CD8-positive, alpha-beta T cell (primary cell): ENCODE measurements at regions of chr6 and their contacts with region 1.

Region 1: GRCh38 chr6:45714741-45715507 is 300.7 kb downstream of the CLIC5 start:
- DNase-seq: peak; percentile 12 to 81 (median 48)
- ATAC-seq: peak; percentile 83
- H3K4me3 ChIP-seq: no peak overlapping the region
- H3K4me3 Mint-ChIP-seq: no peak overlapping the region
- H3K27ac ChIP-seq: no peak overlapping the region
- H3K27ac Mint-ChIP-seq: no peak overlapping the region
- H3K4me1 ChIP-seq: peaks cover 5% of the 10 kb centered on the region
- H3K4me1 Mint-ChIP-seq: peaks cover 12% of the 10 kb centered on the region
- H3K27me3 ChIP-seq: no peaks in the 10 kb centered on the region
- H3K27me3 Mint-ChIP-seq: no peaks in the 10 kb centered on the region
- CTCF ChIP-seq: peak; percentile 72

Region 2: GRCh38 chr6:44475779-44476434 is 1239.0 kb before region 1 on chr6:
- CTCF ChIA-PET with region 1: interaction called, 20 read pairs
- POLR2A ChIA-PET with region 1: interaction called, 4 read pairs
- intact Hi-C with region 1: loop called in 1 of 2 experiments (anchors 1 kb)
- DNase-seq: peak; percentile 26 to 80 (median 60)
- ATAC-seq: peak; percentile 74
- H3K4me3 ChIP-seq: no peak overlapping the region
- H3K4me3 Mint-ChIP-seq: no peak overlapping the region
- H3K27ac ChIP-seq: no peak overlapping the region
- H3K27ac Mint-ChIP-seq: no peak overlapping the region
- H3K4me1 ChIP-seq: peaks cover 9% of the 10 kb centered on the region
- H3K4me1 Mint-ChIP-seq: peaks cover 2% of the 10 kb centered on the region
- H3K27me3 ChIP-seq: no peaks in the 10 kb centered on the region
- H3K27me3 Mint-ChIP-seq: no peaks in the 10 kb centered on the region
- CTCF ChIP-seq: peak; percentile 70

Region 3: GRCh38 chr6:44662461-44663121 is 1052.3 kb before region 1 on chr6:
- CTCF ChIA-PET with region 1: interaction called, 119 read pairs
- POLR2A ChIA-PET with region 1: no interaction called
- intact Hi-C with region 1: no loop called
- DNase-seq: no peak
- ATAC-seq: no peak
- H3K4me3 ChIP-seq: no peak overlapping the region
- H3K4me3 Mint-ChIP-seq: no peak overlapping the region
- H3K27ac ChIP-seq: no peak overlapping the region
- H3K27ac Mint-ChIP-seq: no peak overlapping the region
- H3K4me1 ChIP-seq: no peaks in the 10 kb centered on the region
- H3K4me1 Mint-ChIP-seq: no peaks in the 10 kb centered on the region
- H3K27me3 ChIP-seq: no peaks in the 10 kb centered on the region
- H3K27me3 Mint-ChIP-seq: no peaks in the 10 kb centered on the region
- CTCF ChIP-seq: no peak

Region 4: DNA sequence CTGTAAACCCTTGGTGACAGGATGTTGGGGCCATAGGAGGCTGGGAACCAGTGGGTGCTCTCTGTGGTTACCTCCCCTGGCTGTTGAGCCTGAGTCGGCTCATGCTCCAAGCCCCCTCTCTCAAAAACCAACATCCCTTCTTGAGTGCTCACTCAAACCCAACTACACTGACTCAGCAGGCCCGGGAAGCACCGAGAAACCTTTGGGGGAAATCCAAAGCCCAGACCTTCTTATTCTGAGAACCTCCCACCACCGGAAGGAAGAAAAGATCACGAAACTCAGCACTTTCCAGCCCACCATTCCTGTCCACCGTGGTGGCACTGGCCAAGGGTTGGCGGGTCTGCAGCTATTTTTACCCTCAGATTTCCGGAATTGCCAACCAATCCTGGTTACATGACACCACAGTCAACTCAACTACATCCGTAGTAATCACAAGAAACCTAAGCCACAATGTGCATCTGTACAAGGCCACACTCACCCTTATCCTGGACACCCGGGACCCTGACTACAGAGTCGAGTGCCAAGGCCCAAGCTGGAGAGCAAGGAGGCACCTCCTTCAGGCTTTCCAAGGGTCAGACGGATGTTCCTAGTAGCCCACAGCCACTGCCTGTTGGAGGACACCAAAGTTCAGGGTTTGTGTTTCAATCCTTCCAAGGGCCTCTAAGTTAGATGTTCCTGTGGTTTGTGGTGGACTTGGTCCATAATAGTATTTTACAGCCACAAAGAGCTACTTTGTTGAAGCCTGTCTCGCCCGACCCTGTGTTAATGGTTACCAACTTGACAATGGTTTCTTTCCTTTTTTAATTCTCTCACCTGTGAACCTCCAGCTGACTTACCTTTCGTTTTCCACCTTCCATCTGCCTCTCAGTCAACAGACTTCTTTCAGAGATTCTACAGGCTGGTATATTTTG is 1010.4 kb before region 1 on chr6:
- CTCF ChIA-PET with region 1: no interaction called
- POLR2A ChIA-PET with region 1: no interaction called
- intact Hi-C with region 1: no loop called
- DNase-seq: no peak
- ATAC-seq: no peak
- H3K4me3 ChIP-seq: no peak overlapping the region
- H3K4me3 Mint-ChIP-seq: no peak overlapping the region
- H3K27ac ChIP-seq: no peak overlapping the region
- H3K27ac Mint-ChIP-seq: peak overlapping the region; percentile 3
- H3K4me1 ChIP-seq: no peaks in the 10 kb centered on the region
- H3K4me1 Mint-ChIP-seq: peaks cover 5% of the 10 kb centered on the region
- H3K27me3 ChIP-seq: no peaks in the 10 kb centered on the region
- H3K27me3 Mint-ChIP-seq: no peaks in the 10 kb centered on the region
- CTCF ChIP-seq: no peak

Region 5: GRCh38 chr6:44855562-44856411 is 859.1 kb before region 1 on chr6:
- CTCF ChIA-PET with region 1: interaction called, 4 read pairs
- POLR2A ChIA-PET with region 1: no interaction called
- intact Hi-C with region 1: loop called in 1 of 2 experiments (anchors 2 kb)
- DNase-seq: no peak
- ATAC-seq: no peak
- H3K4me3 ChIP-seq: no peak overlapping the region
- H3K4me3 Mint-ChIP-seq: no peak overlapping the region
- H3K27ac ChIP-seq: no peak overlapping the region
- H3K27ac Mint-ChIP-seq: no peak overlapping the region
- H3K4me1 ChIP-seq: peaks cover 32% of the 10 kb centered on the region
- H3K4me1 Mint-ChIP-seq: peaks cover 54% of the 10 kb centered on the region
- H3K27me3 ChIP-seq: no peaks in the 10 kb centered on the region
- H3K27me3 Mint-ChIP-seq: no peaks in the 10 kb centered on the region
- CTCF ChIP-seq: no peak

Region 6: GRCh38 chr6:45421709-45422502 is 293.0 kb before region 1 on chr6:
- CTCF ChIA-PET with region 1: interaction called, 32 read pairs
- POLR2A ChIA-PET with region 1: no interaction called
- intact Hi-C with region 1: loop called (anchors 1 to 5 kb)
- DNase-seq: peak; percentile 8 to 76 (median 56)
- ATAC-seq: peak; percentile 35
- H3K4me3 ChIP-seq: peak overlapping the region; percentile 64 to 76
- H3K4me3 Mint-ChIP-seq: peak overlapping the region; percentile 94
- H3K27ac ChIP-seq: peak overlapping the region in 1 of 2 experiments; percentile 62
- H3K27ac Mint-ChIP-seq: peak overlapping the region; percentile 92
- H3K4me1 ChIP-seq: peaks cover 21% of the 10 kb centered on the region
- H3K4me1 Mint-ChIP-seq: peaks cover 45% of the 10 kb centered on the region
- H3K27me3 ChIP-seq: peaks cover 0 to 13% of the 10 kb centered on the region in 2 experiments
- H3K27me3 Mint-ChIP-seq: peaks cover 2% of the 10 kb centered on the region
- CTCF ChIP-seq: no peak

Region 7: DNA sequence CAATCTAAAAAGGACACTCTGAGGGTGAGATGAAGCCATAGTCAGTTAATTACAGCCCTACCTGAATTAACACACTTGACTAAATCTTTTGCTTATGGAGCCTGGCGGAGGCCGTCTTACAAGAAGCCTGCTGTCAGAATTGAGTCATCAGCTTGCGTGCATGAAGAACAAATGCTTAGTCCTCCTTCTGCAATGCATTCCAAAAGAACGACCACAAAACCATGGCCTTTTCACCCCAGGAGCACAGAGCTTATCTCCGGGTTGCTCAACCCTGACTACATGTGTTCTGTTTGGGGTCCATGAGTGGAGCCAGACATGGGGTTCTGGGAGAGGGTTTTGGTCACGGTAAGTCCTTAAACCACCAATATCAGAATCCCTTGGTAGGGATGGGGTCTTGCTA is 17.3 kb before region 1 on chr6:
- CTCF ChIA-PET with region 1: interaction called, 14 read pairs
- POLR2A ChIA-PET with region 1: no interaction called
- intact Hi-C with region 1: no loop called
- DNase-seq: no peak
- ATAC-seq: no peak
- H3K4me3 ChIP-seq: no peak overlapping the region
- H3K4me3 Mint-ChIP-seq: no peak overlapping the region
- H3K27ac ChIP-seq: no peak overlapping the region
- H3K27ac Mint-ChIP-seq: no peak overlapping the region
- H3K4me1 ChIP-seq: no peaks in the 10 kb centered on the region
- H3K4me1 Mint-ChIP-seq: no peaks in the 10 kb centered on the region
- H3K27me3 ChIP-seq: no peaks in the 10 kb centered on the region
- H3K27me3 Mint-ChIP-seq: no peaks in the 10 kb centered on the region
- CTCF ChIP-seq: no peak

Region 8: DNA sequence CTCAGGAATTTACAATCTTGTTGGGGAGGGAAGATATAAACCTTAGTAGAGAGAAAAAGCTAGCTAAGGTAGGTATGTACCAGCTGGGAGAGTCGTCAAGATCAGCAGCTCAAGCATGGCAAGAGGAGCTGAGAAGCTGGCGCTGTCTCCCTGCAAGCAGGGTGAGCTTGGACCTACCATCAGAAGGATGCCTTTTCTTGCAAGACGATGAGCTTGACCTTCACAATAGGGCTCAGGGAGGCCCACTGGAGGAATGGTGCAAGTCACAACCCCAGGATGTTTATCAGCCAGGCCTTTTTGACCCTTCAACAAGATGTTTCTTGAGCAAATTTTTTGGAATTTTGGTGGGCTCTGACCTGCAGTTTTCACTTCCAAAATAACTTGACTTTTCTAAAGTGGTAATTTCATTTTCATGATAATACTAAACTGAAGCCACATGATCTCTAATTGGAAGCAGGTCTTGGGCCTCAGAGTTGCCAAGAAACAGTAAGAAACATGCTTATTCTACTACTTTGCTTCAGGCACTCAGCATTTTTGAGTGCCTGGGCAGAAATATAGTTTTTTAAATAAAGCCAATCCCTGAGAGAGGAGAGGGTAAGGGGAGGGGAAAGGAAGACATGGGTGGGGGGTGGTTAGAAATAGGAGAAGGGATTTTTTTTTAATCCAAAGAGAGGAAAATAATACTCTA is 42.7 kb after region 1 on chr6:
- CTCF ChIA-PET with region 1: no interaction called
- POLR2A ChIA-PET with region 1: no interaction called
- intact Hi-C with region 1: no loop called
- DNase-seq: no peak
- ATAC-seq: no peak
- H3K4me3 ChIP-seq: no peak overlapping the region
- H3K4me3 Mint-ChIP-seq: no peak overlapping the region
- H3K27ac ChIP-seq: no peak overlapping the region
- H3K27ac Mint-ChIP-seq: no peak overlapping the region
- H3K4me1 ChIP-seq: no peaks in the 10 kb centered on the region
- H3K4me1 Mint-ChIP-seq: no peaks in the 10 kb centered on the region
- H3K27me3 ChIP-seq: no peaks in the 10 kb centered on the region
- H3K27me3 Mint-ChIP-seq: peaks cover 14% of the 10 kb centered on the region
- CTCF ChIP-seq: no peak